ENCODE measurements at regions of chr17 and their contacts with region 1.

Region 1: GRCh38 chr17:38702166-38702899 is 2.7 kb upstream of the MLLT6 start:
- DNase-seq: peak; percentile 58 to 91 (median 78)
- ATAC-seq: peak; percentile 27
- H3K4me3 ChIP-seq: peak overlapping the region; percentile 96 to 97
- H3K4me3 Mint-ChIP-seq: peak overlapping the region; percentile 99
- H3K27ac ChIP-seq: peak overlapping the region; percentile 70 to 94
- H3K27ac Mint-ChIP-seq: peak overlapping the region; percentile 97
- H3K4me1 ChIP-seq: peaks cover 33% of the 10 kb centered on the region
- H3K4me1 Mint-ChIP-seq: peaks cover 51% of the 10 kb centered on the region
- H3K27me3 ChIP-seq: no peaks in the 10 kb centered on the region
- H3K27me3 Mint-ChIP-seq: no peaks in the 10 kb centered on the region
- CTCF ChIP-seq: no peak

Region 2: DNA sequence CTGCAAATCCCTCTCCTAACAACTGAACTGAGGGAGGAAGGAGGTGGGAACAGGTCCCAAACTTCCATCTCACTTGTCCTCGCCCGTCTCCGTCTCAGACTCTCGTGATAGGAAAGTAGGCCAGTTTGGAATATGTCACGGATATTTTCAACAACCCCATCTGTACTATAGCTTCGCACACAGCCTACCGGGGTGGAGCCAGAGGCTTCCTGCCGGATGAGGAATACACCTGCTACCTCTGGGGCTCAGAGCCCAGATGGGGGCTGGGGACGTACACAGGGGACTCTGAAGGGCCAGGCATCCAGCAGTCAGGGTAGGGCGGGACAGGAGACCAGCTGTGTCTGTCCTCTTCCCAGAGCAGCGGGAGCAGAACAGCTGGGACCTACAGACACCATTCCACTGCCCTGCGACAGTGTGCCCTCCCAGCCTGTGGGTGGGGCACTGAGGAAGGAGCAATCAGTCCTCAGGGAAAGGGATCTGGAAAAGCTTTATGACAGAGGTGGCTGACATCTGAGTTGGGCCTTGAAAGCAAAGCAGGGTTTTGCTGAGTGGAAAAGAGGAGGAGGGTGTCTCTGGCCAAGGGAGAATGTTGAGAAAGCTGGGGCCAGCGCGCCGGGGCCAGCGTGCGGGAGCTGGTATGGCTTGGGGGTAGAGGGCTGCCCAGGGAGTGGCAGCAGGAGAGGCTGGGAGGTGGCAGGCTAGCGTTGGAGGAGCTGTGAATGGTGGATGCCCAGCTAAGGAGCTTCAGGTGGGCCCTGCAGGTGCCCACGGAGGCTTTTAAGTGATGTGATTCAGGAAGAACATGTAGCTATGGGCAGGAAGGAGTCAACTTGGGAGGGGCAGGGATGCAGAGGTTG is 85.1 kb before region 1 on chr17:
- CTCF ChIA-PET with region 1: no interaction called
- POLR2A ChIA-PET with region 1: no interaction called
- intact Hi-C with region 1: no loop called
- DNase-seq: no peak
- ATAC-seq: no peak
- H3K4me3 ChIP-seq: no peak overlapping the region
- H3K4me3 Mint-ChIP-seq: no peak overlapping the region
- H3K27ac ChIP-seq: no peak overlapping the region
- H3K27ac Mint-ChIP-seq: no peak overlapping the region
- H3K4me1 ChIP-seq: no peaks in the 10 kb centered on the region
- H3K4me1 Mint-ChIP-seq: no peaks in the 10 kb centered on the region
- H3K27me3 ChIP-seq: peaks cover 0 to 6% of the 10 kb centered on the region in 2 experiments
- H3K27me3 Mint-ChIP-seq: peaks cover 36% of the 10 kb centered on the region
- CTCF ChIP-seq: no peak

Region 3: GRCh38 chr17:38719289-38719942 is 17.1 kb after region 1 on chr17:
- CTCF ChIA-PET with region 1: interaction called, 12 read pairs
- POLR2A ChIA-PET with region 1: interaction called, 13 read pairs
- intact Hi-C with region 1: no loop called
- DNase-seq: no peak
- ATAC-seq: no peak
- H3K4me3 ChIP-seq: no peak overlapping the region
- H3K4me3 Mint-ChIP-seq: no peak overlapping the region
- H3K27ac ChIP-seq: no peak overlapping the region
- H3K27ac Mint-ChIP-seq: no peak overlapping the region
- H3K4me1 ChIP-seq: peaks cover 9% of the 10 kb centered on the region
- H3K4me1 Mint-ChIP-seq: peaks cover 31% of the 10 kb centered on the region
- H3K27me3 ChIP-seq: no peaks in the 10 kb centered on the region
- H3K27me3 Mint-ChIP-seq: no peaks in the 10 kb centered on the region
- CTCF ChIP-seq: no peak

Region 4: GRCh38 chr17:38724337-38724988 is 22.1 kb after region 1 on chr17:
- CTCF ChIA-PET with region 1: interaction called, 13 read pairs
- POLR2A ChIA-PET with region 1: interaction called, 89 read pairs
- intact Hi-C with region 1: no loop called
- DNase-seq: peak in 2 of 9 experiments; percentile 45 to 47
- ATAC-seq: no peak
- H3K4me3 ChIP-seq: no peak overlapping the region
- H3K4me3 Mint-ChIP-seq: no peak overlapping the region
- H3K27ac ChIP-seq: peak overlapping the region in 1 of 2 experiments; percentile 71
- H3K27ac Mint-ChIP-seq: peak overlapping the region; percentile 77
- H3K4me1 ChIP-seq: peaks cover 57% of the 10 kb centered on the region
- H3K4me1 Mint-ChIP-seq: peaks cover 61% of the 10 kb centered on the region
- H3K27me3 ChIP-seq: no peaks in the 10 kb centered on the region
- H3K27me3 Mint-ChIP-seq: no peaks in the 10 kb centered on the region
- CTCF ChIP-seq: no peak

Measured in CD8-positive, alpha-beta T cell (primary cell).